Posterior cingulate gyrus (tissue), 11 donors: ENCODE measurements at regions of chr1 and their contacts with region 1.

Region 1: GRCh38 chr1:46724991-46725735 is 6.2 kb upstream of the EFCAB14 start:
- DNase-seq: peak in 8 of 10 donors; percentile 37 to 94 (median 64)

Region 2: GRCh38 chr1:46401964-46402626 is 323.1 kb before region 1 on chr1:
- intact Hi-C with region 1: loop called (anchors 10 kb)
- DNase-seq: peak; percentile 62 to 98 (median 83)

Region 3: DNA sequence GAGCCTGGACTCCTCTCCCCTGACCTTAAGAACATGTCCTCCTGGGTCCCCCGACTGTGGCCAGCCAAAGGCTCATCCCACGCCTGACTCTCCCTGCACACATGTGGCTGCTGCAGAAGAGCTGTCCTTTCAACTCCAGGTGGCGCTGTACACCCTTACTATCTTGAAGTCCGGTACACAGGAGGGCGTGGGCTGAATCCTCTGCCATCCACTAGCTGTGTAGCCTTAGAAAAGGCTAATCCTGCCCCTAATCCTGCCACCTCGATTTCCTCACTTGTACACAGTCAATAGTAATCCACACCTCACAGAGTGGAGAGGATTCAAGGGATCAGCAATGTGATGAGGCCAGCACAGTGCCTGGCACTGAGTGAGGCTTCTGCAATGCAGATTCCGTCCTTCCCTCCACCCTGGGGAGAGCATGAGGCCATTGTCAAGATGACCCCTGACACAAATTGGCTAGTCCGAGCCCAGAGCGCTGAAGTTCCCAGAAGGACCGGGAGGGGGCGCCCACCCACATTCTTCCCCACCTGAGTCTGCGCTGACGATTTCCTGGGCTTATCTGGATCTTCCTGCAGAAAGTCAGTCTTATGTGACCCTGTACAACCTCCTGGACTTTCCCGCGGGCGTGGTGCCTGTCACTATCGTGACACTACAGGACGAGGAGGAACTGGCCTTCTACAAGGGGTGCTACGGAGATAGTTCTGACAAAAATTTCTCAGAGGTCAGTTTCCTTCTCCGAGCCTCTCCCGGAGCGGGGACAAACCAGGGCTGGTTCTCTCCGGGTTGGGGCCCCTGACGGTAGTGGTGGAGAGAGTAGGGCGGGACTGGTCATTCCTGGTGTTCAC is 282.6 kb before region 1 on chr1:
- intact Hi-C with region 1: loop called (anchors 5 kb)
- DNase-seq: peak; percentile 27 to 93 (median 70)

Region 4: DNA sequence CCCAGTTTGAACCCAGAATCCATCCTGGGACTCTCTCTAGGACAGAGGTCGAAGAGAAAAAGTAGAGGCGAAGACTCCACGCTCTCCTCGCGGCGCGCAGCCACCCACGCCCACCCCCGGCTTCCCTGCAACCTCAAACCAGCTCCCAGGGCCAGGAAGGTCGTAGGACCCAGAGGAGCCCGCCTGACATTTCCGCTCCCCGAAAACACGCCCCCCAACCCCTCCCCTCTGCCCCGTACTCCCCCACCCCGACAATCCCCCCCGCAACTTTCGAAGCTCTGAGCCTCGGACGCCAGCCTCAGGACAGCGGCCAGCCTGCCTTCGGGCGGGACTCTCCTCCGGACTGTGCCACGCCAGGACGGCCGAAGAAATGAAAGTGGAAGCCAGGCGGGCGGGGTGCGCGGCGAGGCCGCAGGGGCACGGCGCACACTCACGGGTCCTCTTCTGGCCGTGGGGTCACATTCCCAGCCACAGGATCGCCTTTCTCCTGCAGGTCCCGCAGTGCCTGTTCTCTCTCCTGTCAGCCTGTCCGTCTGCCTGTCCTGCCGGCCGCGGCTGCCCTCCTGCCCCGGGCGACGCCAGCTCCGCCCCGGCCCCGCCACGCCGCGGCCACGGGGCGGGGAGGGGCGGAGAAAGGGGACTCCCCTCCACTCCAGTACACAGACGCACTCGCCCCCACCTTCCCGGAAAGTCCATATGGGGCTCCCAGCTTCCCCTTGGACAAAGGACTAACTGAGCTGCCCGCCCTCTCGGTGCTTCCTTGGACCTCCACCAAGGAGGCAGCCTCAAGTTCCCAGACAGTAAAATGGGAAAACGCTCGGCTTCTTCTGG is 108.7 kb before region 1 on chr1 and contains the start of gene MOB3C:
- intact Hi-C with region 1: loop called (anchors 5 kb)
- DNase-seq: peak; percentile 49 to 95 (median 67)

Region 5: DNA sequence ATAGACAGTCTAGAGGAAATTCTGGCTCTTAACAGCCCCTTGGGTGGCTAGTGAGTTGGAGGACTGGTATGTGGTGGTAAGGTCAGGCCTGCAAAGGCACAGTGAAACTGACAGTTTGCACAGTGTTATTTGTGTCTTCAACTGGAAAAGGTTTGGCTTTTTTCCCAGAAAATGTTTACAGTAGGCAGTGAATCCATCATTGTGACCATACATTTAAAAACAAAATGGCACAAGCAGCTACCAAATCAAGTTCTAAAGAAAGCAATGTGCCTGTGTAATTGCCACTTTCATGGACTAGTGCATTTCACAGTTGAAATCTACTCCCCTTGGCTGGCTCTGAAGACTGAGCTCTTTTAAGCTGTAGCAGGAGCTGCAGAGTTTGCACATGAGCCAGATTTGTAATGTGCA is 81.8 kb before region 1 on chr1:
- intact Hi-C with region 1: no loop called
- DNase-seq: no peak